Heart left ventricle (tissue), 16 donors: ENCODE measurements at regions of chr10 and their contacts with region 1.

Region 1: GRCh38 chr10:119686439-119687191 is 35.4 kb downstream of the BAG3 start:
- DNase-seq: peak; percentile 75 to 89 (median 83)
- ATAC-seq: peak; percentile 70 to 91 (median 88)
- H3K4me3 ChIP-seq: peak overlapping the region in 9 of 12 donors; percentile 24 to 57 (median 40)
- H3K27ac ChIP-seq: peak overlapping the region in 10 of 12 donors; percentile 9 to 73 (median 36)
- H3K4me1 ChIP-seq: peaks cover 0 to 26% (median 12%) of the 10 kb centered on the region in 12 donors
- H3K27me3 ChIP-seq: no peaks in the 10 kb centered on the region
- CTCF ChIP-seq: peak; percentile 90 to 97 (median 94)
- POLR2A ChIP-seq: no peak

Region 2: GRCh38 chr10:119650692-119651513 is 35.7 kb before region 1 on chr10 and contains the start of gene BAG3:
- intact Hi-C with region 1: loop called in 1 of 10 experiments (anchors 2 kb)
- DNase-seq: peak; percentile 95 to 98 (median 97)
- ATAC-seq: peak; percentile 90 to 94 (median 92)
- H3K4me3 ChIP-seq: peak within 1 kb of the TSS; percentile 68 to 99 (median 82)
- H3K27ac ChIP-seq: peak within 1 kb of the TSS; percentile 91 to 99 (median 98)
- H3K4me1 ChIP-seq: peaks cover 12 to 42% (median 32%) of the 10 kb centered on the region in 12 donors
- H3K27me3 ChIP-seq: no peaks in the 10 kb centered on the region
- CTCF ChIP-seq: no peak
- POLR2A ChIP-seq: no peak
- total RNA-seq, gene BAG3: 85.1 to 219 (median 141) TPM

Region 3: GRCh38 chr10:119750391-119751230 is 64.0 kb after region 1 on chr10:
- intact Hi-C with region 1: loop called in 1 of 10 experiments (anchors 10 kb)
- DNase-seq: peak in 4 of 5 donors; percentile 59 to 71 (median 64)
- ATAC-seq: peak; percentile 78 to 99 (median 95)
- H3K4me3 ChIP-seq: no peak overlapping the region
- H3K27ac ChIP-seq: no peak overlapping the region
- H3K4me1 ChIP-seq: peaks cover 0 to 10% (median 0%) of the 10 kb centered on the region in 12 donors
- H3K27me3 ChIP-seq: no peaks in the 10 kb centered on the region
- CTCF ChIP-seq: peak; percentile 76 to 98 (median 90)
- POLR2A ChIP-seq: no peak

Region 4: GRCh38 chr10:119807960-119808697 is 121.5 kb after region 1 on chr10:
- intact Hi-C with region 1: no loop called
- DNase-seq: no peak
- ATAC-seq: no peak
- H3K4me3 ChIP-seq: no peak overlapping the region
- H3K27ac ChIP-seq: no peak overlapping the region
- H3K4me1 ChIP-seq: peaks cover 0 to 6% (median 0%) of the 10 kb centered on the region in 12 donors
- H3K27me3 ChIP-seq: no peaks in the 10 kb centered on the region
- CTCF ChIP-seq: no peak
- POLR2A ChIP-seq: no peak

Region 5: GRCh38 chr10:119872860-119873681 is 186.5 kb after region 1 on chr10:
- intact Hi-C with region 1: loop called in 1 of 10 experiments (anchors 5 kb)
- DNase-seq: peak; percentile 90 to 96 (median 93)
- ATAC-seq: peak; percentile 93 to 98 (median 98)
- H3K4me3 ChIP-seq: peak overlapping the region; percentile 70 to 95 (median 82)
- H3K27ac ChIP-seq: peak overlapping the region; percentile 80 to 98 (median 93)
- H3K4me1 ChIP-seq: peaks cover 4 to 45% (median 20%) of the 10 kb centered on the region in 12 donors
- H3K27me3 ChIP-seq: no peaks in the 10 kb centered on the region
- CTCF ChIP-seq: peak in 1 of 12 donors; percentile 3
- POLR2A ChIP-seq: peak in 1 of 2 donors; percentile 71

Region 6: DNA sequence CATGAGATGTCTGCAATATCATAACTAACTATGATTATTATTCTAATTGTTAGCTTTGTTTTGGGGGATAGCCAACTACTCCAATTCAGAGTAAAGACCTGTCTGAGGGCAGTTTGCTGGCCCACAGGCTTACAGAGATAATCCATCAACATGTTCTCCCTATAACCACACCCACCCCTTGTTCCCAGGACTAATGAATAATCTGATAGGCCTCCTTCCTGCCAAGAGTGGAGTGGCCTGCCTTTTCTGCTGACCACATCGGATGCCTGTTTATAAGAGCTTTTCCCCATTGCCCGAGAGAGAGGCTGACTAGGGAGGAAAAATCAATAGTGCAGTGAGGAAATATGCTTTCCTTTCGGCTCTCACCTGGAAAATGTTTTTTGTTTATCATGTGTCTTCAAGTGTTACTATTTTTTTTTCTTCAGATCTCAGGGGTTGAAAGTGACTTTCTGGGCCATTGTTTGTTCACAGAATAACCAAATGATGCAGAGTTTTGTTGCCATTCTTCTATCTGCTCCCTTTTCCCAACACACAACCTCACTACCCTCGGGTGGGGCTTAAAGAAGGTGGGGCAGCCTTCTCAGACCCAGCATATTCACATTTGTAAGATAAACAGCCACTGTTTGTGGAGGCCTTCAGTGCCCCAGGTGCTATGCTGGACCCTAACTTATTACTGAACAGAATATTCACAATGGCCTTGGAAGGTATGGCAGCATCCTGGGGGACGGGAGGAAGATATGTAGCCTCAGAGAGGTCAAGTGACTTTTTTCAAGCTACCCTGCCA is 808.8 kb after region 1 on chr10:
- intact Hi-C with region 1: no loop called
- DNase-seq: no peak
- ATAC-seq: no peak
- H3K4me3 ChIP-seq: no peak overlapping the region
- H3K27ac ChIP-seq: no peak overlapping the region
- H3K4me1 ChIP-seq: no peaks in the 10 kb centered on the region
- H3K27me3 ChIP-seq: no peaks in the 10 kb centered on the region
- CTCF ChIP-seq: no peak
- POLR2A ChIP-seq: no peak